Calu3 (cell line): ENCODE measurements at regions of chr4 and their contacts with region 1.

Region 1: DNA sequence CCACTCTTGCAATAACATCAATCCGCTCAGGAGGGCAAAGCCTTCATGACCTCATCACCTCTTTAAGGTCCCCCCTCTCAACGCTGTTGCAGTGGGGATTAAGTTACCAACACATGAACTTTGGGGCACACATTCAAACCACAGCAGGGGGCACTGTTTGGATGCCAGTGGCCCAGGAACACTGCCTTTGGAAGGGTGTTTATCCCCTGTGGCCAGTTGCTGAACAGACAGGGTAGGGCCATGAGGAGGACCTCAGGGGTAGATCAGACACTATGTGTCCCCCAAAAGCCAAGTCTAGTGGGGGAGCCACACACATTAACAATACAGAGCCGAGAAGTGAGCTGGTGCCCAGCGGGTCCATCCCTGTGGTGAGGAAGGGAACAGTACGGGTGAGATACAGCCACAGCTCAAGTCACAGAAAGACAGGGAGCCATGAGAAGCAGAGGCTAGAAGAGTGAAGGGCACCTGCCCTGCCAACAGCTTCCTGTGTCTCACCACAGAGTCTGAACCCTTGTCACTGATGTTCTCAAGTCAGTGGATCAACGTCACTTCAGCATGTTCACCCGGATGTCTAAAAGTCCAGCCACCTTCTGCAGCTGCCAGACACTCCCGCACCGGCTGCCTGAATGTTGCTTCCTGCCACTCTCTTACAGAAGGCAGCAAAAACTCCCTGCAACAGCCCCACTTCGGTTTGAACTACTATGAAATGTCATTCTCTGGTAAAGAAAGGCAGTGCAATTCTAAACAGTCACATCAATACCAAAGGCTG is 19.9 kb upstream of the MXD4 start:
- DNase-seq: no peak
- H3K4me3 Mint-ChIP-seq: no peak overlapping the region
- H3K27ac Mint-ChIP-seq: no peak overlapping the region
- H3K4me1 Mint-ChIP-seq: no peaks in the 10 kb centered on the region
- H3K27me3 Mint-ChIP-seq: peaks cover 38% of the 10 kb centered on the region
- CTCF ChIP-seq: no peak

Region 2: DNA sequence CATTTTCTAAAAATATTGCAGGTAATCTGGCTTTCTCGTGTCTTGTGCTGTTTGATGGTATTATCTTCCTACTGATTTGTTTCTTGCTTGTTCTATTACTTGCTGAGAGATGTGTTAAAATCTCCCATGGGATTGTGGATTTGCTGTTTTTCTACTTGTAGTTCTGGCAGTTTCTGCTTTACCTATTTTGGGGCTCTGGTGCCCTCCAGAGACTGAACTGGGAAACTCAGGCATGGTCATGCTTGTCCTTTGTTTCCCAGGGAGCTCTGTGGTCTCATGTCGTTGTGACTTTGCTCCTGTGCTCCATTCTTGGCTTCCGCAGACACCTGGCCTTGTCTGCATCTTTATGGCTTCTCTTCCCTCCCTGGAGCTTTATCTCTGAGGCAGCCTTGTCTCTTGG is 371.1 kb before region 1 on chr4:
- CTCF ChIA-PET with region 1: no interaction called
- intact Hi-C with region 1: no loop called
- DNase-seq: peak; percentile 46
- H3K4me3 Mint-ChIP-seq: no peak overlapping the region
- H3K27ac Mint-ChIP-seq: peak overlapping the region; percentile 63
- H3K4me1 Mint-ChIP-seq: peaks cover 35% of the 10 kb centered on the region
- H3K27me3 Mint-ChIP-seq: no peaks in the 10 kb centered on the region
- CTCF ChIP-seq: no peak

Region 3: DNA sequence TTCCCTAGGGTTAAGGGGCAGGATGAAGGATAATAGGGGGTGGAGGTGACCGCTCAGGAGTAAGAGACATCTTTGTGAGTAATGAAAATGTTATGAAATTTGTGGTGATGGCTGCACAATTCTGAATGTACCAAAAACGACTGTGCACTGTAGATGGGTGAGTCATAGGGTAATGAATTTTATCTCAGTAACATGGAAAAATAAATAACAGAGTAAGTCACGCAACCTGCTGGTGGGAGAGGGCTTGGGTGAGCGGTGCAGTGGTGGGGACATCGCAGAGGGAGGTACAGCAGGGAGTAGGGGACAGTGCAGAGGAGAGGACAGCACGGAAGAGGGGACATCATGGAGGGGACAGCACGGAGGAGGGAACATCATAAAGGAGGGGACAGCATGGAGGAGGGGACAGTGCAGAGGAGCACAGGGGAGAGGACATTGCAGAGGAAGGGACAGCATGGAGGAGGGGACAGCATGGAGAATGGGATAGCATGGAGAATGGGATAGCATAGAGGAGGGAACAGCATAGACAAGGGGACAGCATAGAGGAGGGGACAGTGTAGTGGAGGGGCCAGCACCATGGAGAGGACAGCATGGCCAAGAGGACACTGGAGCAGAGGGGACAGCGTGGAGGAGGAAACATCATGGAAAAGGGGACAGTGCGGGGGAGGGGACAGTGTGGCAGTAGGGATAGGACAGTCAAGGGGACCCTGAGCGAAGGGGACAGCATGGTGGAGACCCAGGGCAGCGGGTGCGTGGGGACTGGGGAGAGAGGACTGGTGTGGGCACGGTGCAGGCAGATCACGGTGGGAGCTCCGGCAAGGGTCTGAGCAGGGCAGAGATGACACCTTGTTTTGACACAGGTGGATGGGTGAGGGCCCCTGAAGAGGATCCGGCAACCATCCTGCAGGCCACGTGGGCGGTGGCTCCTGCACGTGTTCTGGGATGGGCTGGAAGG is 48.6 kb after region 1 on chr4:
- CTCF ChIA-PET with region 1: no interaction called
- intact Hi-C with region 1: loop called (anchors 10 kb)
- DNase-seq: peak; percentile 37
- H3K4me3 Mint-ChIP-seq: no peak overlapping the region
- H3K27ac Mint-ChIP-seq: peak overlapping the region; percentile 26
- H3K4me1 Mint-ChIP-seq: peaks cover 16% of the 10 kb centered on the region
- H3K27me3 Mint-ChIP-seq: peaks cover 10% of the 10 kb centered on the region
- CTCF ChIP-seq: no peak

Region 4: DNA sequence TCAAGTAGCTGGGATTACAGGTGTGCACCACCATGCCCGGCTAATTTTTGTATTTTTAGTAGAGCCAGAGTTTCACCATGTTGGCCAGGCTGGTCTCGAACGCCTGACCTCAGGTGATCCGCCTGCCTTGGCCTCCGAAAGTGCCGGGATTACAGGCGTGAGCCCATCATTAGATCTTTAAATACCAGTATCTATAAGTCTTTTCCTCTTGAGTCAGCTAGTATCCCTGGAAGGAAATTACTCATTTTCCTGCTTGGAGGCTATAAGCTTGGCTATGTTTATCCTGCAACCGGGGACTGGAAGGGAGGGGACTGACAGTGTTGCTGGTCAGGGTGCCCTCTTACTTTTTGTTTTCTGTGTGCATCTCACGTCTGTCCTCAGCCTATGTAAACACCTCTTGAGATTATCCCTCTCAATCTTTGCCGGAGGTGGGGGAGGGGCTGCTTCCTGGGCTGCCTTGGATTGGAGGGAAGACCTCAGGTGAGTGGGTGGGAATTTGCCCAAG is 829.6 kb after region 1 on chr4:
- CTCF ChIA-PET with region 1: no interaction called
- intact Hi-C with region 1: no loop called
- DNase-seq: no peak
- H3K4me3 Mint-ChIP-seq: no peak overlapping the region
- H3K27ac Mint-ChIP-seq: no peak overlapping the region
- H3K4me1 Mint-ChIP-seq: no peaks in the 10 kb centered on the region
- H3K27me3 Mint-ChIP-seq: no peaks in the 10 kb centered on the region
- CTCF ChIP-seq: no peak